HEK293T (cell line): ENCODE measurements at regions of chr19 and their contacts with region 1.

Region 1: DNA sequence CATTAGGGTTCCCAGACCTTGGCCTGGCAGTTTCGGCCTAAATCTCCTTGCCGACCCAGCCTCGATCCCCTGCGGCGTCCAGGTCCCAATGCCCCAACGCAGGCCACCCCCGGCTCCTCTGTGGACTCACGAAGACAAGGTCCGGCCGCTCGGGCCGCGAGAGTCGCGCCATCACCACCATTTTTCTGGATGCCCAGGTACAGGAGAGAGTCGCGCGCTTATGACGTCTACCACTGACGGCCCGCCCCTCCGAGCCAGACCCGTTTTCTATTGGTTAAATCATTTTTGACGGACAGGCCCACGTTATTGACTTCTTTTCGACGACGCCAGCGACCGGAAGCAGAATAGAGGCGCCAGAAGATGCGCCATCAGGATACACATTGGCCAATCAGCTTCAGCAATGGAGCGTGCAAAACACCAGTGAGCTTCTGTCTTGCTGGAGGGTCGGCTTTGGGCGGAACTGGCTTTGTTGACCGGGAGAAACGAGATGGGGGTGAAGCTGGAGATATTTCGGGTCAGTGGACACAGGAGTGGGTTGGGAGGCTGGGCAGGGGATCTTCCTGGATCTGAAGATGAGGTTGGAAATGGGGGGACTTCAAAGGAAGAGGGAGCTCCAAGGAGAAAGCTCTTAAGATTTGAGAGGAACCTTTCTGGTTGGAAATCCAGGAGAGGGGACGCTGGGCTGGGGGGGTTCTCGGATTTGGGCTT is at the starts of genes PET100 and XAB2:
- DNase-seq: peak; percentile 97

Region 2: GRCh38 chr19:7595466-7596133 is 33.9 kb before region 1 on chr19 and contains the start of gene CAMSAP3:
- CTCF ChIA-PET with region 1: no interaction called
- POLR2A ChIA-PET with region 1: interaction called, 10 read pairs
- DNase-seq: peak; percentile 68